ENCODE measurements at regions of chr14 and their contacts with region 1.

Region 1: GRCh38 chr14:55430024-55430690 is 10.3 kb downstream of the TBPL2 start:
- DNase-seq: peak; percentile 87
- H3K4me3 ChIP-seq: no peak overlapping the region
- H3K27ac ChIP-seq: no peak overlapping the region
- H3K4me1 ChIP-seq: peaks cover 15% of the 10 kb centered on the region
- H3K27me3 ChIP-seq: no peaks in the 10 kb centered on the region
- CTCF ChIP-seq: peak; percentile 35 to 65

Region 2: GRCh38 chr14:55416866-55417265 is 13.3 kb before region 1 on chr14:
- CTCF ChIA-PET with region 1: interaction called, 6 read pairs
- dilution Hi-C with region 1: no loop called
- in situ Hi-C with region 1: no loop called
- intact Hi-C with region 1: loop called (anchors 1 kb)
- DNase-seq: no peak
- H3K4me3 ChIP-seq: no peak overlapping the region
- H3K27ac ChIP-seq: no peak overlapping the region
- H3K4me1 ChIP-seq: peaks cover 10% of the 10 kb centered on the region
- H3K27me3 ChIP-seq: no peaks in the 10 kb centered on the region
- CTCF ChIP-seq: peak; percentile 76